ENCODE measurements at regions of chr3 and their contacts with region 1.

Region 1: DNA sequence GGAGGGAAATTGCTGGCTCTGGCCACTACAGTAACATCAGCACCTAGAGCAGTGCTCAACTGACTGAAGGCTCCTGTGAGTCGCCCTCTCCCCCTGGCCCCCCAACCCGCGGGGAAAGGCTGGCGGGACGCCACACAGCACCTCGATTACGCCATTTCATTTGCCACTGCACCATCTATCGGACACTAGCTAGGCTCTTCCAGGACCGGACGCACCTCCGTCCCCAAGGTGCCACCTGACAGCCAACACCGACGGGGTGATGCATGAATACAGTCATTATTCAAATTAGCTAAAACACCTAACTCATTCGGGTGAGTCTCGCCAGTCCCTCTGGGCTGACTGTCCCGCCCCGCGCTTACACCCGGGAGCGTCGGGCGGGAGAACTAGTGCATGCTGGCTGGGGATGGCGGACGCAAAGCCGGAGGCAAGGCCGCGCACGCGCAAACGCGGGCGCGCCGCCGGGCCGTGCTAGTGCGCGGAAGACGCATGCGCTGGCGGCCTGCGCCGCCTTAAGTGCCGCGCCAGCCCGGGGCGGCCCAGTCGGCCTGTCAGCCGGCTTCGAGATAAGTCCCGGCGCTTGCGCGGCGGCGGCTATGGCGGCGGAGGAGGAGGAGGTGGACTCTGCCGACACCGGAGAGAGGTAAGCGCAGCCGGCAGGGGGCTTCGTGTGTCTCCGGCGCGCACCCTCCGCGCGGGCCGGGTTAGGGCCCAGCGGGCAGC is at the start of gene ABHD5:
- DNase-seq: peak; percentile 91
- H3K4me3 Mint-ChIP-seq: peak within 1 kb of the TSS; percentile 85
- H3K27ac Mint-ChIP-seq: peak within 1 kb of the TSS; percentile 82
- H3K4me1 Mint-ChIP-seq: peaks cover 23% of the 10 kb centered on the region
- H3K27me3 Mint-ChIP-seq: peaks cover 8% of the 10 kb centered on the region
- total RNA-seq, gene ABHD5: 11.9 and 15.2 TPM in 2 replicates

Region 2: GRCh38 chr3:43105596-43106292 is 584.8 kb before region 1 on chr3 and contains the start of gene POMGNT2:
- intact Hi-C with region 1: loop called (anchors 2 kb)
- DNase-seq: peak; percentile 78
- H3K4me3 Mint-ChIP-seq: peak within 1 kb of the TSS; percentile 63
- H3K27ac Mint-ChIP-seq: no peak within 1 kb of the TSS
- H3K4me1 Mint-ChIP-seq: peaks cover 5% of the 10 kb centered on the region
- H3K27me3 Mint-ChIP-seq: peaks cover 13% of the 10 kb centered on the region
- total RNA-seq, gene POMGNT2: 3.9 and 4.1 TPM in 2 replicates

Region 3: DNA sequence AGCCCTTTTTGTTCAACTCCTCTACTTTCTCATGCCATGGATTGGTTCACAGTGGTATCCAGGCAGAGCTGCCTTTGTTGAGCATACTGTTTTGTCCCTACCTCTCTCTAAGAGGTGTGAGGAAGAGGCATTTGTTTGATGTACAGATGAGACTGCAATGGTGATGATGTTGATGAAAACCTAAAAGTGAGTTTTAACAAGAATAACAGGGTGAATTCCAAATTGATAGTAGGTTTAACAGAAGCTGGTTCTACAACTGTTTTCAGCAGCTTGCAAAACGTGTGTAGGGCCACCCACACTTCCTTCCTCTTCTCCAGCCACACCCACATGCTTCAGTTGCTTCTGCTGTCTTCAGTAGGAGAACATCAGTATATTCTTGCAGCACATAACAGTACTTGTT is 394.0 kb before region 1 on chr3:
- intact Hi-C with region 1: loop called (anchors 5 kb)
- DNase-seq: peak; percentile 56
- H3K4me3 Mint-ChIP-seq: peak overlapping the region; percentile 70
- H3K27ac Mint-ChIP-seq: peak overlapping the region; percentile 78
- H3K4me1 Mint-ChIP-seq: peaks cover 66% of the 10 kb centered on the region
- H3K27me3 Mint-ChIP-seq: no peaks in the 10 kb centered on the region

Region 4: GRCh38 chr3:43621656-43622432 is 68.7 kb before region 1 on chr3 and contains the start of gene ANO10:
- intact Hi-C with region 1: loop called (anchors 1 kb)
- DNase-seq: peak; percentile 92
- H3K4me3 Mint-ChIP-seq: peak within 1 kb of the TSS; percentile 89
- H3K27ac Mint-ChIP-seq: peak within 1 kb of the TSS; percentile 77
- H3K4me1 Mint-ChIP-seq: peaks cover 13% of the 10 kb centered on the region
- H3K27me3 Mint-ChIP-seq: peaks cover 29% of the 10 kb centered on the region
- total RNA-seq, gene ANO10: 3.9 and 4.9 TPM in 2 replicates